Activated B cell treated with CpG ODN at 0.5 μM for 24 hours (primary cell): ENCODE measurements at regions of chr17 and their contacts with region 1.

Region 1: DNA sequence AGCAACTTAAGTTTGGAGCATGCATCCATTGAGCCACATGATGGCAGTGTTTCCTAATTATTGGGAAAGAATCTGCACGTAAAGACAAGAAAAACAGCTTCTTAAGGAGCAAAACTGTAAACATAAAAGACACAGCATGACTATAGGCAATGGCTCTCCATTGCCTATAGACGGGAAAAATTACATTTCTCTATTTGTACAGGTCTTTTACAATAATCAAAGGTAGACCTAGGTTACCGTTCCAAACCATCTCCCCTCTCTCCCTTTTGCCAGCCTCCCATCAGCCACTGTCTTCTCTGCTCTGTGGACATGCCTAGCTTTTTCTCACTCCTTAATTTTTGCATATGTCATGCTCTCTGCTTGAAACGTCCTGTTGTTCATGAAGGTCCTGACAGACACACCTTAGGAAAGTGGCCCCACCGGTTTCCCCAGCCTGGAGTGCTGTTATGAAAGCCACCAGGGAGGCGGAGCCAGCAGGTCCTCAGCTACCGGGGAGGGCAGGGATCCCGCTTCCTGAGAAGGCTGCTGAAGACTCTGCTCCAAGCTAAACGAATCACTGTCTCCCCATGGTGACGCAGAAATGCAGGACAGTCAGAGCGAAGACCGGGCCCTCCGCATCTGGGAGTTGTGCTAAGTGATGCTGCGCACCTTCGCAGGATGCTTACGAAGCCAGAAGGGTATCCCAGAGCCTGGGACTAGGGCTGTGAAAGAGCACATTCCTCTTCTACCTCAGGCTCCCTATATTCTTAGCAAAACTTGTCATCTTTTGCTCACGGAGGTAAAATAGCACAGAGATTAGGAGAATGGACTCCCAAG is 2.2 kb upstream of the SLC16A11 start:
- DNase-seq: peak; percentile 30
- ATAC-seq: peak; percentile 11
- H3K4me3 Mint-ChIP-seq: peak overlapping the region; percentile 81
- H3K27ac Mint-ChIP-seq: peak overlapping the region; percentile 86
- H3K4me1 Mint-ChIP-seq: peaks cover 45% of the 10 kb centered on the region
- H3K27me3 Mint-ChIP-seq: no peaks in the 10 kb centered on the region
- CTCF ChIP-seq: no peak

Region 2: GRCh38 chr17:7004398-7005253 is 41.5 kb before region 1 on chr17:
- CTCF ChIA-PET with region 1: interaction called, 13 read pairs
- POLR2A ChIA-PET with region 1: no interaction called
- intact Hi-C with region 1: no loop called
- DNase-seq: no peak
- ATAC-seq: peak; percentile 95
- H3K4me3 Mint-ChIP-seq: no peak overlapping the region
- H3K27ac Mint-ChIP-seq: peak overlapping the region; percentile 54
- H3K4me1 Mint-ChIP-seq: peaks cover 22% of the 10 kb centered on the region
- H3K27me3 Mint-ChIP-seq: no peaks in the 10 kb centered on the region
- CTCF ChIP-seq: peak; percentile 50

Region 3: GRCh38 chr17:7035591-7036368 is 10.3 kb before region 1 on chr17 and contains the start of gene SLC16A13:
- CTCF ChIA-PET with region 1: interaction called, 12 read pairs
- POLR2A ChIA-PET with region 1: interaction called, 56 read pairs
- intact Hi-C with region 1: loop called (anchors 1 kb)
- DNase-seq: peak; percentile 92
- ATAC-seq: peak; percentile 95
- H3K4me3 Mint-ChIP-seq: peak within 1 kb of the TSS; percentile 94
- H3K27ac Mint-ChIP-seq: peak within 1 kb of the TSS; percentile 98
- H3K4me1 Mint-ChIP-seq: peaks cover 42% of the 10 kb centered on the region
- H3K27me3 Mint-ChIP-seq: no peaks in the 10 kb centered on the region
- CTCF ChIP-seq: no peak
- total RNA-seq, gene SLC16A13: 10.4 and 11.8 TPM in 2 replicates

Region 4: GRCh38 chr17:7177196-7177953 is 131.3 kb after region 1 on chr17:
- CTCF ChIA-PET with region 1: interaction called, 29 read pairs
- POLR2A ChIA-PET with region 1: interaction called, 6 read pairs
- intact Hi-C with region 1: loop called (anchors 1 kb)
- DNase-seq: peak; percentile 50
- ATAC-seq: peak; percentile 95
- H3K4me3 Mint-ChIP-seq: peak overlapping the region; percentile 52
- H3K27ac Mint-ChIP-seq: no peak overlapping the region
- H3K4me1 Mint-ChIP-seq: peaks cover 9% of the 10 kb centered on the region
- H3K27me3 Mint-ChIP-seq: peaks cover 15% of the 10 kb centered on the region
- CTCF ChIP-seq: no peak

Region 5: DNA sequence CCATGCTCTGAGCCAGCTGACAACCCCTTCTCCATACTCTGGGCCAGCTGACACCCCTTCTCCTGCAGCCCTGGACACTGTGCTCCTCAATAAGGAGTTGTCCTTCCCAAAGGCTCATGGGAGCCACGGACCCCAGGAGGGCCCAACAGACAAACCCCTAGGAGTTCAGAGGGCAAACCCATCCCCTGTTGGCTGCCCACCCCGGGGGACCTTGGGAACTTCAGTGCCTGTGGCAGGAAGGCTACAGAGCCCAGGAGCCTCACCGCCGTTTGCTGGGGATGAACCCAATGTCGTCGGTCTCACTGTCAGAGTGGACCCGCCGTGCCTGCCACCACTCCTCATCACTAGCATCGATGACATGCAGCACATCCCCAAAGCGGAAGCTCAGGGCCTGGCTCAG is 147.9 kb after region 1 on chr17:
- CTCF ChIA-PET with region 1: no interaction called
- POLR2A ChIA-PET with region 1: no interaction called
- intact Hi-C with region 1: no loop called
- DNase-seq: no peak
- ATAC-seq: no peak
- H3K4me3 Mint-ChIP-seq: no peak overlapping the region
- H3K27ac Mint-ChIP-seq: no peak overlapping the region
- H3K4me1 Mint-ChIP-seq: no peaks in the 10 kb centered on the region
- H3K27me3 Mint-ChIP-seq: no peaks in the 10 kb centered on the region
- CTCF ChIP-seq: no peak

Region 6: GRCh38 chr17:7280519-7281429 is 234.7 kb after region 1 on chr17:
- CTCF ChIA-PET with region 1: interaction called, 4 read pairs
- POLR2A ChIA-PET with region 1: no interaction called
- intact Hi-C with region 1: loop called (anchors 5 kb)
- DNase-seq: peak; percentile 82
- ATAC-seq: peak; percentile 83
- H3K4me3 Mint-ChIP-seq: peak overlapping the region; percentile 82
- H3K27ac Mint-ChIP-seq: peak overlapping the region; percentile 77
- H3K4me1 Mint-ChIP-seq: peaks cover 14% of the 10 kb centered on the region
- H3K27me3 Mint-ChIP-seq: peaks cover 12% of the 10 kb centered on the region
- CTCF ChIP-seq: peak; percentile 42

Region 7: GRCh38 chr17:7583253-7584109 is 537.4 kb after region 1 on chr17 and contains the start of gene MPDU1:
- CTCF ChIA-PET with region 1: no interaction called
- POLR2A ChIA-PET with region 1: interaction called, 4 read pairs
- intact Hi-C with region 1: loop called (anchors 10 kb)
- DNase-seq: peak; percentile 90
- ATAC-seq: peak; percentile 76
- H3K4me3 Mint-ChIP-seq: peak within 1 kb of the TSS; percentile 100
- H3K27ac Mint-ChIP-seq: peak within 1 kb of the TSS; percentile 100
- H3K4me1 Mint-ChIP-seq: peaks cover 64% of the 10 kb centered on the region
- H3K27me3 Mint-ChIP-seq: no peaks in the 10 kb centered on the region
- CTCF ChIP-seq: no peak
- total RNA-seq, gene MPDU1: 50.7 and 58.9 TPM in 2 replicates